CD4-positive, alpha-beta memory T cell (primary cell): ENCODE measurements at regions of chr19 and their contacts with region 1.

Region 1: DNA sequence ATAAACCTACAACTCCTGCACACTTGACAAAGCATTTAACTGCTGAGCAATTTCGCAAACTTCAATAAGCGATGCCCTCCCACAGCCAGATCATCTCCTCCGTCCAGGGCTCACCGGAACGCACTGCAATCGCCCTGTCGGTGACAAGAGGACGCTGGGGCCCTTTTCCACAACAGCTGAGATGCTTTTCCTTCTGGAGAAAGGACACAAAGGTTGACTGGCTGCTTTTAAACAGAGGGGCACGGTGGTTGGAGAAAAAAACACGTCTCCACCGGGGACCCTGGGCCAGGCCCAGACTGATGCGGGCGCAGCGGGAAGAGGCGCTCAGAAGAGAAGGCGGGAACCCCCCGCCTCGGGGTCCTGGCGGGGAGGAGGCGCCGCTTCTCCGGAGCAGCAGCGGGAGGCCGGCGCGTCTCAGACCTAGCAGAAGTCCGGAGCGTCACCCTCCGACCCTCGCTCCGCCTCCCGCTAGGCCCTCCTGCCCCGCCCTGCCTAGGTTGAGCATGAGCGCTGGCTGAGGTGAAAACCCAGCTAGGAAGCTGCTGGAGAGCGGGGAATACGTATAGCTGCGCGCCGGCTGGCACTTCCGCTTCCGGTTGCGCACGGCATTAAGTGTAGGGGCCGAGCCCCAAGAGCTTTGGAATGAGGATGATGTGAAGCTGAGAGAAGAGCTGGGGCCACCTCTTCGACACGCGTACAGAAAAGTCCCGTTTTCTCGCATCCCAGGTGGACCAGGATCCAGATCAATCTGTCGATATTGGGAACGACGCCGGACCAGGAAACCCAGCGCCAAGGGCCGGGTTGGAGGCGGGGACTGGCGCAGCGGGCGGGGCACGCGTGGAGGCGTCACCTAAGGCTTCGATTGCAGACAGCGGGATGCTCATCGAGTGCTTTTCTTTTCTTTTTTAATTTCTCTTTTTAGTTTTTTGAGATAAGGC is at the start of gene ZNF846:
- DNase-seq: peak; percentile 91 to 94 (median 92)
- H3K4me3 ChIP-seq: peak within 1 kb of the TSS; percentile 98 to 100
- H3K4me3 Mint-ChIP-seq: peak within 1 kb of the TSS; percentile 94 to 99 (median 96)
- H3K27ac ChIP-seq: peak within 1 kb of the TSS; percentile 94
- H3K27ac Mint-ChIP-seq: peak within 1 kb of the TSS; percentile 98 to 100 (median 99)
- H3K4me1 ChIP-seq: peaks cover 15% of the 10 kb centered on the region
- H3K4me1 Mint-ChIP-seq: peaks cover 6 to 12% (median 9%) of the 10 kb centered on the region in 4 donors
- H3K27me3 ChIP-seq: no peaks in the 10 kb centered on the region
- H3K27me3 Mint-ChIP-seq: no peaks in the 10 kb centered on the region
- total RNA-seq, gene ZNF846: 16.9 to 19.7 TPM

Region 2: DNA sequence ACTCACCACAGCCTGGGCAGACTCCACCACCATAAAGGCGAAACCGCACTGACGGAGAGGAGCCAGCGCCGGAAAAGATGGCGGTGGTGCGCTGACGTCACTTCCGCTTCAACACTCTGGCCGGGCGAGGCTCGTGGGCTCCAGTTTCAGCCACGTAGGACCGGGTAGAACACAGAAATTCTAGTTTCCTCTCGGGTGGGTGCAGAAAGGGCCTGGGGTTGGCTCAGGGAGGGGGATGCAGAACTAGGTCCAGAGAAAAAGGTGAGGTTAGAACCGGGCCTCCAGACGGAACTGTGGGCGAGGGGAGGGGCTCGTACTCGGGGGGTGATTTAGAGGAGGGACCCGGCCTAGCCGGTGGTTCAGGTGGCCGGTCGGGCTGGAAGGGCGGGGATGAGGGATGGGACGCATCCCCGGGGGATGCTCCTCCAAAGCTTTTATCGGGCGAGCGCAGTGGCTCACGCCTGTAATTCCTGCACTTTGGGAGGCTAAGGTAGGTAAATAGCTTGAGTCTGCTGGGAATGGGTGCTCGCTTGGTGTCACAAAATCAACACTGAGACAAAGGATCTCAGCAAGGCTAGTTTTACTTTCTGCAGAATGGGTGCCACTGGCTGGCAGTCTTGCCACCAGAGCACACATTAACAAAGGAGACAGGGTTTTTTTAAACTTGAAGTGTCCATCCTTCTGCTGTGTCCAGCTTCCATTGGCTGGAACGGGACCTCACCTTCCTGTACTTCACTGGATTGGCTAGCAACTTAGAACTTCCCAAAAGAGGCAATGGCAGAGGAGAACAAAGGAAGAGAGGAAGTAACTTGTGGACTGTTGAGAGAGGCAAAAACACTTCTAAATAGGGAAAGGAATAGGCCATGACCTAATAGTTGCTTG is 147.0 kb before region 1 on chr19 and contains the start of gene ZNF561:
- CTCF ChIA-PET with region 1: interaction called, 13 read pairs
- POLR2A ChIA-PET with region 1: interaction called, 36 read pairs
- intact Hi-C with region 1: loop called (anchors 1 kb)
- DNase-seq: peak; percentile 89 to 92 (median 90)
- H3K4me3 ChIP-seq: peak within 1 kb of the TSS; percentile 87 to 94
- H3K4me3 Mint-ChIP-seq: peak within 1 kb of the TSS; percentile 96 to 100 (median 99)
- H3K27ac ChIP-seq: peak within 1 kb of the TSS; percentile 88
- H3K27ac Mint-ChIP-seq: peak within 1 kb of the TSS; percentile 100
- H3K4me1 ChIP-seq: peaks cover 21% of the 10 kb centered on the region
- H3K4me1 Mint-ChIP-seq: peaks cover 16 to 29% (median 22%) of the 10 kb centered on the region in 4 donors
- H3K27me3 ChIP-seq: no peaks in the 10 kb centered on the region
- H3K27me3 Mint-ChIP-seq: peaks cover 0 to 3% of the 10 kb centered on the region in 2 donors
- total RNA-seq, gene ZNF561: 67.2 to 75.8 TPM

Region 3: GRCh38 chr19:9674663-9675357 is 93.6 kb before region 1 on chr19 and contains the start of gene ZNF562:
- CTCF ChIA-PET with region 1: interaction called, 3 read pairs
- POLR2A ChIA-PET with region 1: interaction called, 9 read pairs
- intact Hi-C with region 1: loop called (anchors 1 kb)
- DNase-seq: peak; percentile 78 to 81 (median 80)
- H3K4me3 ChIP-seq: peak within 1 kb of the TSS; percentile 91 to 98
- H3K4me3 Mint-ChIP-seq: peak within 1 kb of the TSS; percentile 94 to 98 (median 96)
- H3K27ac ChIP-seq: peak within 1 kb of the TSS; percentile 75
- H3K27ac Mint-ChIP-seq: peak within 1 kb of the TSS; percentile 77 to 99 (median 98)
- H3K4me1 ChIP-seq: peaks cover 8% of the 10 kb centered on the region
- H3K4me1 Mint-ChIP-seq: peaks cover 12 to 27% (median 18%) of the 10 kb centered on the region in 4 donors
- H3K27me3 ChIP-seq: no peaks in the 10 kb centered on the region
- H3K27me3 Mint-ChIP-seq: no peaks in the 10 kb centered on the region
- total RNA-seq, gene ZNF562: 21.2 to 23.2 TPM

Region 4: GRCh38 chr19:9785367-9786331 is 17.2 kb after region 1 on chr19:
- CTCF ChIA-PET with region 1: interaction called, 6 read pairs
- POLR2A ChIA-PET with region 1: interaction called, 8 read pairs
- intact Hi-C with region 1: loop called (anchors 1 kb)
- DNase-seq: peak; percentile 89 to 96 (median 93)
- H3K4me3 ChIP-seq: peak overlapping the region in 1 of 2 donors; percentile 62
- H3K4me3 Mint-ChIP-seq: peak overlapping the region; percentile 82 to 93 (median 92)
- H3K27ac ChIP-seq: peak overlapping the region; percentile 77
- H3K27ac Mint-ChIP-seq: peak overlapping the region; percentile 85 to 99 (median 96)
- H3K4me1 ChIP-seq: peaks cover 12% of the 10 kb centered on the region
- H3K4me1 Mint-ChIP-seq: peaks cover 14 to 36% (median 27%) of the 10 kb centered on the region in 4 donors
- H3K27me3 ChIP-seq: no peaks in the 10 kb centered on the region
- H3K27me3 Mint-ChIP-seq: no peaks in the 10 kb centered on the region

Region 5: DNA sequence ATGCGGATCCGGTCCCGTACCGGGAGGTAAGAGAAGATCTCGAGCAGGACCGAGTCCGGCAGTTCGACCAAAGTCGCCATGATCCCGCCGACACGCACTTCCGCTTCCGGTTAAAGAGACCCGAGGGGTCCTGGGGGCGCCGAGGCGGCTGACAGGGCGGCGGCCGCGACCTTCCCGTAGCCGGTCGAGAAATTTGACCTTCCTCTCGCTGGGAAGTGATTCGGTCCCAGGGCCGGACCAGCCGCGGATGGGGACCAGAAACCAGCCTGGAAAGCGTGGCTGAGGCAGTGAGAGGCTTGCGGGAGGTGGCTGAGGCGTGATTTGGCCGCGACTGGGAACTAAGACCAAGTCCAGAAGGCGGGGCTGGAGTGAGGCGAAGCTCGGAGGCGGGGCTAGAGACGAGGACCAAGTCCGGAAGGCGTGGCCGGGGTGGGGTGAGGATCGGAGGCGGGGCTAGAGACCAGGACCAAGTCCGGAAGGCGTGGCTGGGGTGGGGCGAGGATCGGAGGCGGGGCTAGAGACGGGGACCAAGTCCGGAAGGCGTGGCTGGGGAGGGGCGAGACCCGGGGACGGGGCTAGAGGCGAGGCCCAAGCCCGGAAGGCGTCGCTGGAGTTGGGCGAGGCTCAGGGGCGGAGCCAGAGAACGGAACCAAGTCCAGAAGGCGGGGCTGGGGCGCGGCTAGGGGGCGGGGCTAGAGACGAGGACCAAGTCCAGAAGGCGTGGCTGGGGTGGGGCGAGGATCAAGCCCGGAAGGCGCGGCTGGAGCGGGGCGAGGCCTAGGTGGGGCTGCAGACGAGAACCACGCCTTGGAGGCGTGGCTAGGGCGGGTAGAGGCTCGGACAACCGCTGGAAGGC is 50.5 kb after region 1 on chr19 and contains the start of gene FBXL12:
- CTCF ChIA-PET with region 1: no interaction called
- POLR2A ChIA-PET with region 1: interaction called, 13 read pairs
- intact Hi-C with region 1: loop called (anchors 1 kb)
- DNase-seq: peak; percentile 100
- H3K4me3 ChIP-seq: peak within 1 kb of the TSS; percentile 95
- H3K4me3 Mint-ChIP-seq: peak within 1 kb of the TSS; percentile 89 to 95 (median 91)
- H3K27ac ChIP-seq: peak within 1 kb of the TSS; percentile 92
- H3K27ac Mint-ChIP-seq: peak within 1 kb of the TSS; percentile 86 to 97 (median 96)
- H3K4me1 ChIP-seq: peaks cover 19% of the 10 kb centered on the region
- H3K4me1 Mint-ChIP-seq: peaks cover 21 to 40% (median 34%) of the 10 kb centered on the region in 4 donors
- H3K27me3 ChIP-seq: no peaks in the 10 kb centered on the region
- H3K27me3 Mint-ChIP-seq: no peaks in the 10 kb centered on the region
- total RNA-seq, gene FBXL12: 27.8 to 30.7 TPM

Region 6: GRCh38 chr19:9827289-9828238 is 59.1 kb after region 1 on chr19 and contains the start of gene UBL5:
- CTCF ChIA-PET with region 1: interaction called, 4 read pairs
- POLR2A ChIA-PET with region 1: interaction called, 11 read pairs
- intact Hi-C with region 1: no loop called
- DNase-seq: peak; percentile 88 to 93 (median 89)
- H3K4me3 ChIP-seq: peak within 1 kb of the TSS; percentile 87 to 96
- H3K4me3 Mint-ChIP-seq: peak within 1 kb of the TSS; percentile 99 to 100 (median 100)
- H3K27ac ChIP-seq: peak within 1 kb of the TSS; percentile 82
- H3K27ac Mint-ChIP-seq: peak within 1 kb of the TSS; percentile 92 to 100 (median 98)
- H3K4me1 ChIP-seq: peaks cover 23% of the 10 kb centered on the region
- H3K4me1 Mint-ChIP-seq: peaks cover 15 to 41% (median 29%) of the 10 kb centered on the region in 4 donors
- H3K27me3 ChIP-seq: no peaks in the 10 kb centered on the region
- H3K27me3 Mint-ChIP-seq: no peaks in the 10 kb centered on the region
- total RNA-seq, gene UBL5: 241 to 247 TPM